ENCODE measurements at regions of chr5 and their contacts with region 1.

Region 1: DNA sequence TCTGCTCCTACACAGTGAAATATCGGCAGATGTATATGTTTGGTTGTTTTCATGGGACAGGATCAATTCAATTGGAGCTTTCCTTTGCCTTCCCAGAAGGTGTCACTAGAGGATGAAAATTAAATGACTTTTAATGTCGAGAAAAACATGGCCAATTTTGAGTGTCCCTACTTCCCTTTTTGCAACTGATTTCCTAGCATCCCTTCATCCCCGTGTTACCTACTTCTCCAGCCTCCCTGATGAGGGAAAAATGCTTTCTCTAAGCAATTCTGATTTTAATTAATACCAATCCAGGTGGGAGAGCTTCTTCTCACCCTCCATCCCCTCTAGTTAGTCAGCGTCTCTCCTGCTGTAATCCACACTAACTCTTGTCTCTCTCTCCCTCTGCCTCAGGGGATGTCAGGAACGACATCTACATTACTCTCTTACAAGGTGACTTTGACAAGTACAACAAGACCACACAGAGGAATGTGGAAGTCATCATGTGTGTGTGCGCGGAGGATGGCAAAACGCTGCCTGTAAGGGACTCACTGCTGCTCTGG is 64.9 kb downstream of the DOCK2 start:
- DNase-seq: peak; percentile 54
- H3K27ac ChIP-seq: no peak overlapping the region
- CTCF ChIP-seq: peak; percentile 59; the same call in 1 of the 2 replicates

Region 2: GRCh38 chr5:169682026-169682425 is 20.0 kb before region 1 on chr5:
- CTCF ChIA-PET with region 1: no interaction called
- POLR2A ChIA-PET with region 1: no interaction called
- DNase-seq: no peak
- H3K27ac ChIP-seq: no peak overlapping the region
- CTCF ChIP-seq: no peak

Region 3: DNA sequence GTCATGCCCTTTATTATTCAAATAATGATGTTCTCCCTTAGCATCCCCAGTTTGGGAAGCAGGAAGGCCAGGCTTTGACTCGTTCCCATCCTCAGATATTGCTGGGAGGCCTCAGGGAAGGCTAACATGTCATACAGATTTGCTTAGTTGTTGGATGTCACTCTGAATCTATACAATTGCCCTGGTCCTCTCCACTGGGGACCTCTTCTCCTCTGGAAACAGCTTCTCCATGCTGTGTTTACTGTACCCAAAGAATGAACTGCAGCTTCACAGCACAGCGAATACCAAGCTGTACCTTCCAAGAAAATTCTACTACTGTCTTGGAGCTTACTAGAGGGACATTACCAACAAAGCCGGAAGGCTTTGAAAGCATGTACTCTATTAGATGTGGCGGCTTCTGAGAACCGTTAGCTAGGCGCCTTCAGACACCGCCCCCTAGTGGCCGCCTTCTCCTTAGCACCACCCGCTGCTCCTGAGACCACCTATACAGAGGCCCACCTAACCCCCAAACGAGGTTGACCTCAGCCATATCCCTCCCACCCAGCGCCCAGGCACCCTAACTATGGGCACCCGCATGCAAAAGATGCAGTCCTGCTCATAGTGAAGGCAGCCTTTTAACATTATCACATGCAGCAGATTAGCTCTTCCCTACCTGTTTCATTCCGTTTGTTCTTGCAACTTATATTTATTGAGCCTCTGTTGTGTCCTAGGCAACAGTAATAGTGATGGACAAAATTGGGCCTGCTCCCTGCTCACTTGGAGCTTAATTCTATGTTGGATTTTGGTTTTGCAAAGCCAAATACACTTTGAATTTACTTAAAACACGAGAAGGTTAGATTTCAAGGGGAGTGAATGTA is 368.8 kb after region 1 on chr5:
- CTCF ChIA-PET with region 1: interaction called, 13 read pairs
- POLR2A ChIA-PET with region 1: no interaction called
- DNase-seq: peak; percentile 53
- H3K27ac ChIP-seq: no peak overlapping the region
- CTCF ChIP-seq: peak; percentile 82